T-cell (primary cell): ENCODE measurements at regions of chr1 and their contacts with region 1.

Region 1: DNA sequence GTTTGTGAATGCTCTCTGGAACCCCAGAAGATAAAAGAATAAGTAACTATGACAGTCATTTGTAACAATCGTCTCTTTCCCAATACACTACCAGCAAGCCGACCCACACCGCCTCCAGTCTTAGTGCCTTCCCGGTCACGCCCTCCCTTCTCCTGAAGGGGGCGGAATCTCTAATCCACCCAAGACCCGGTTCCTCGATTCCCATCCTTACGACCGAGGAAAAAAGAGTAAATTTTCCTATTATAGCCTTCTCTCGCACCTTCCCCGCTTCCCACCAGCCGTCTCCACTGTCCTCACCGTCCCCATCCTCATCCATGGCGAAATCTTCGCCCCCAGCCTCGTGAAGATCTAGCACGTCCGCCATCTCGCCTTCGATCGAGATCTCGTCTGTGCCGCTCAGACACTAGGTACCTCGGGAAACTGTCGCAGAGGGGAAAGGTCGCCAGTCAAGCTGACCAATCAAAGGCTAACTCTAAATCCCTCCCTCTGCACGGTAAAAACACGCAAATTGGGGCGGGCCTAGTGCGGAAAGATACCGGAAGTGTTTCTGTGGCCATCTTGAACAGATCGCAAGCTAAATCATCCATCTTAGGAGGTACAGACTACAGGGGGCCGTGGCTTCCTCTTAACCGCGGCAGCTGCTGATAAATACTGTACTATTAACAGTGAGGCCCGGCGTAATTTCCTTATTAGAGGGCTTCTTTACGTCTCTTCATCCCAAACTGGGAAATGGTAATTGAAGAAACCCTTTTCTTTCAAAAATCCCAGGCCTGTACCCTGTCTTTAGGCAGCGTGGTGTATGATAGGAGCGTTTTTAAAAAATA is at the start of gene RBM8A:
- DNase-seq: peak; percentile 80 to 98 (median 94)
- ATAC-seq: peak; percentile 97 to 99 (median 98)
- H3K4me3 ChIP-seq: peak within 1 kb of the TSS; percentile 91 to 93
- H3K4me3 Mint-ChIP-seq: peak within 1 kb of the TSS in 2 of 3 donors; percentile 66 to 74
- H3K27ac ChIP-seq: peak within 1 kb of the TSS; percentile 95
- H3K27ac Mint-ChIP-seq: no peak within 1 kb of the TSS
- H3K4me1 ChIP-seq: peaks cover 16 to 26% of the 10 kb centered on the region in 2 experiments
- H3K4me1 Mint-ChIP-seq: peaks cover 15 to 23% (median 22%) of the 10 kb centered on the region in 3 donors
- H3K27me3 ChIP-seq: no peaks in the 10 kb centered on the region
- H3K27me3 Mint-ChIP-seq: no peaks in the 10 kb centered on the region
- total RNA-seq, gene RBM8A: 124 to 153 (median 130) TPM

Region 2: GRCh38 chr1:145957443-145958319 is 30.4 kb after region 1 on chr1 and contains the start of gene LIX1L:
- CTCF ChIA-PET with region 1: interaction called in 1 of 2 experiments, 34 read pairs
- POLR2A ChIA-PET with region 1: interaction called, 10 to 26 read pairs
- DNase-seq: peak; percentile 86 to 97 (median 94)
- ATAC-seq: peak; percentile 88 to 90 (median 89)
- H3K4me3 ChIP-seq: peak within 1 kb of the TSS; percentile 80 to 84
- H3K4me3 Mint-ChIP-seq: peak within 1 kb of the TSS; percentile 89 to 92 (median 90)
- H3K27ac ChIP-seq: peak within 1 kb of the TSS; percentile 84
- H3K27ac Mint-ChIP-seq: peak within 1 kb of the TSS; percentile 89 to 95
- H3K4me1 ChIP-seq: peaks cover 43 to 57% of the 10 kb centered on the region in 2 experiments
- H3K4me1 Mint-ChIP-seq: peaks cover 66 to 82% (median 71%) of the 10 kb centered on the region in 3 donors
- H3K27me3 ChIP-seq: no peaks in the 10 kb centered on the region
- H3K27me3 Mint-ChIP-seq: no peaks in the 10 kb centered on the region
- total RNA-seq, gene LIX1L: 43.4 to 74.4 (median 64.2) TPM

Region 3: DNA sequence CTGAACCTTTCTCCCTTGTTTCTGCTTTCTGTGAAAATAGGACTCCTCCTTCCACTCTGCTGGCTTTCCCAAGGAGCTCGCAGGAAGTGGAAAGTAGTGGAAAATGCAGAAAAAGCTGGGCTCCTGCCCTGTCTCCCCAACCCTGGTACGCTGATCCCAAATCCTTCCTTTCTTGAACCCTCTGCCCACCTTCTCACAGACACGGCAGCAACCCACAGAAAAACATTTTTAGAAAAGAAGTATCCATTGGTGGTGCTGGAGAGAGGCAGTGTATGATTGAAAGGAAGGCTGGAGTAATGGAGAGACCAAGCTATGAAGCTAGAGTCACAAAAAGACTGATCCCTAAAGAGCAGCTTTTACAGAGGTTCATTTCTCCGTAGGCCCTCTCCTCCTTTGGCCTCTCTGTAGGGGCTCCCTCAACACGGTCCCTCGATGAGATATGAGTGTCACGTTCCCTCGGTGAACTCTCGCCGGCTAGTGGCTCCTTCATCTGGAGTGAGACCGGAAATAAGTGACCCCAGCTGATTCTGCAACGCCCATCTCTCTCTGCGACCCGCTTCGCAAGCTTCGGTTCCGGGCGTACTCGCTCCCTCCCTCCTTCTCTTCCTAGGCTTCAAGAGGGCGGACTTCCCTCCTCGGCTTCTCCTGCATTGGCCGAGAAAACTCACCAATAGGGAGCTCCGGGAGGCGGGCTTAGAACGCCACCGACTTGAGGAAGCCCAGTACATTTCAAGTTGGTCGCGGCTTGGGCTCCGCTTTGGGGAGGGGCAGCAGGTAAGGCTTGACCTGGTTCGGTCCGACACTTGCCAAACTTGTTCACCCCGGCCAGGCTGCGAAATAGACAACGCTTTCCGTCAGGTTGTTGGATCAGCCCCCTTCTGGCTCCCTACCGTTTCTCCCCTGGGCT is 37.0 kb after region 1 on chr1 and contains the starts of genes ANKRD34A and POLR3GL:
- CTCF ChIA-PET with region 1: interaction called, 5 to 34 read pairs
- POLR2A ChIA-PET with region 1: interaction called, 10 to 19 read pairs
- DNase-seq: peak; percentile 80 to 98 (median 92)
- ATAC-seq: peak; percentile 90 to 91 (median 90)
- H3K4me3 ChIP-seq: peak within 1 kb of the TSS; percentile 78 to 89
- H3K4me3 Mint-ChIP-seq: peak within 1 kb of the TSS; percentile 88 to 95 (median 92)
- H3K27ac ChIP-seq: peak within 1 kb of the TSS; percentile 70
- H3K27ac Mint-ChIP-seq: peak within 1 kb of the TSS; percentile 94 to 99
- H3K4me1 ChIP-seq: peaks cover 32 to 54% of the 10 kb centered on the region in 2 experiments
- H3K4me1 Mint-ChIP-seq: peaks cover 54 to 72% (median 68%) of the 10 kb centered on the region in 3 donors
- H3K27me3 ChIP-seq: no peaks in the 10 kb centered on the region
- H3K27me3 Mint-ChIP-seq: no peaks in the 10 kb centered on the region
- total RNA-seq, gene ANKRD34A: 0.68 to 3.5 (median 1.7) TPM
- total RNA-seq, gene POLR3GL: 30.9 to 41.7 (median 38.3) TPM